Heart left ventricle (tissue), 16 donors: ENCODE measurements at regions of chr12 and their contacts with region 1.

Region 1: DNA sequence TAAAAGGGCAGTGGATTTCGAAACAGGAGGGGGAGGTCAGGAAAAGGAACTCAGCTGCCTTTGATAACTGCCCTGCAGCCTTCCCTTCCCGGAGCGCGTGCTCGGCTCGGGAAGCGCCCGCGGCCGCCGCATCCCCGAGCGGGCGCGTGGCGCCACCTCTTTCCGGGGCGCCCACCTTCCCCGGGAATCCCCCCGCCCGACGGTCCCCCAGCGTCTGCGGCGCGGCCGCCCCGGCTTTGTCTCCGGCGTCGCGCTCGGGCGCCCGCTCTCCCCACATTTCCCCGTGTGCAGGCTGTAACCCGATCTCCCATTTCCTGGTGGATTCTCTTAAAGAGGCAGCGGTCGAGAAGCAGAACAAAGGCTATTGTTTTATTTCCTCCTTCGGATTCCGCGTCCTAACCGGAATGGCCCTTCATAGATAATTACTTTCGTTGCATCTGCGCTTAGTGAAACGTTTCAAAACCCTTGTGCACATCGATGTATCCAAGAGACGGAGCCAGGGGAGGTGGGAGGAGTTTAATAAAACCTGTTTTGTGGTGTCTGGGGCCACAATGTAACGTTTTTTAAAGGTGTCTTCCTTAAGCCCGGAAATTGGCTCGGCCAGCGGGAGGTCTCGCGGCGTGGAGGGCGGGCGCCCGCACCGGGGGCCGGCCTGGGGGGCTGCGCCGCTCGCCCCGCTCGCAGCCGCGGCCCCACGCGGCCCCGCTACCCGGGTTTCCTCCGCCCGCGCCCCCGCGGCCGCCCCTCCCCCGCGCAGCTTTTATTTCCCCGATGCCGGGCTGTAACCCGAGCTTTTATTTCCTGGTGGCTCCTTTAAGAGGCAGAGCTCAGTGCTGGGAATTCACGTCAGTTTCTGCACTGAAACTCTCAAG is at the start of gene ETV6:
- DNase-seq: peak; percentile 75 to 83 (median 77)
- ATAC-seq: peak; percentile 46 to 83 (median 67)
- H3K4me3 ChIP-seq: peak within 1 kb of the TSS; percentile 55 to 94 (median 85)
- H3K27ac ChIP-seq: peak within 1 kb of the TSS; percentile 89 to 100 (median 98)
- H3K4me1 ChIP-seq: peaks cover 0 to 35% (median 23%) of the 10 kb centered on the region in 12 donors
- H3K27me3 ChIP-seq: no peaks in the 10 kb centered on the region
- CTCF ChIP-seq: peak in 2 of 12 donors; percentile 7 to 15
- POLR2A ChIP-seq: peak in 1 of 2 donors; percentile 45
- total RNA-seq, gene ETV6: 7.1 to 37.3 (median 14.4) TPM

Region 2: DNA sequence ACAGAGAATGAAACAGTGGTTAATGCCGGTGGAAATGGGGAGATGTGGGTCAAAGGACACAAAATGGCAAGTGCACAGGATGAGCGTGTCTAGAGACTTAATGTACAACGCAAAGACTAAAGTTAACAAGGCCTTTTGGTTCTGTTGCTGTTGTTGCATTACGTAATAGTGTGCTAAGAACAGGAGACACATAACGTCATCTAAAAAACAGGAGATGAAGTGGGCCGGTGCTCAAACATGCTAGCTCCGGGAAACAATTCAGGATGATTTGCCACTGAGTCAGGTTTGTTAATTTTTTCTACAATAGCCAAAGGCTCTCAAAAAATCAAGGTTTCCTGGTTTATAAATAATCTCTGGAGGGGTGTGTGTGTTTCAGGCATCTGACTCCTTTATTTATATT is 55.9 kb after region 1 on chr12:
- intact Hi-C with region 1: loop called in 1 of 10 experiments (anchors 5 kb)
- DNase-seq: no peak
- ATAC-seq: peak in 3 of 4 donors; percentile 28 to 58 (median 55)
- H3K4me3 ChIP-seq: no peak overlapping the region
- H3K27ac ChIP-seq: peak overlapping the region in 8 of 12 donors; percentile 6 to 79 (median 48)
- H3K4me1 ChIP-seq: peaks cover 0 to 84% (median 45%) of the 10 kb centered on the region in 12 donors
- H3K27me3 ChIP-seq: no peaks in the 10 kb centered on the region
- CTCF ChIP-seq: no peak
- POLR2A ChIP-seq: no peak

Region 3: GRCh38 chr12:11758510-11759493 is 109.7 kb after region 1 on chr12:
- intact Hi-C with region 1: loop called in 6 of 10 experiments (anchors 2 to 10 kb)
- DNase-seq: peak in 4 of 5 donors; percentile 52 to 68 (median 60)
- ATAC-seq: peak; percentile 65 to 83 (median 81)
- H3K4me3 ChIP-seq: peak overlapping the region in 2 of 12 donors; percentile 1 to 7
- H3K27ac ChIP-seq: peak overlapping the region; percentile 37 to 93 (median 86)
- H3K4me1 ChIP-seq: peaks cover 5 to 94% (median 74%) of the 10 kb centered on the region in 12 donors
- H3K27me3 ChIP-seq: no peaks in the 10 kb centered on the region
- CTCF ChIP-seq: no peak
- POLR2A ChIP-seq: no peak

Region 4: DNA sequence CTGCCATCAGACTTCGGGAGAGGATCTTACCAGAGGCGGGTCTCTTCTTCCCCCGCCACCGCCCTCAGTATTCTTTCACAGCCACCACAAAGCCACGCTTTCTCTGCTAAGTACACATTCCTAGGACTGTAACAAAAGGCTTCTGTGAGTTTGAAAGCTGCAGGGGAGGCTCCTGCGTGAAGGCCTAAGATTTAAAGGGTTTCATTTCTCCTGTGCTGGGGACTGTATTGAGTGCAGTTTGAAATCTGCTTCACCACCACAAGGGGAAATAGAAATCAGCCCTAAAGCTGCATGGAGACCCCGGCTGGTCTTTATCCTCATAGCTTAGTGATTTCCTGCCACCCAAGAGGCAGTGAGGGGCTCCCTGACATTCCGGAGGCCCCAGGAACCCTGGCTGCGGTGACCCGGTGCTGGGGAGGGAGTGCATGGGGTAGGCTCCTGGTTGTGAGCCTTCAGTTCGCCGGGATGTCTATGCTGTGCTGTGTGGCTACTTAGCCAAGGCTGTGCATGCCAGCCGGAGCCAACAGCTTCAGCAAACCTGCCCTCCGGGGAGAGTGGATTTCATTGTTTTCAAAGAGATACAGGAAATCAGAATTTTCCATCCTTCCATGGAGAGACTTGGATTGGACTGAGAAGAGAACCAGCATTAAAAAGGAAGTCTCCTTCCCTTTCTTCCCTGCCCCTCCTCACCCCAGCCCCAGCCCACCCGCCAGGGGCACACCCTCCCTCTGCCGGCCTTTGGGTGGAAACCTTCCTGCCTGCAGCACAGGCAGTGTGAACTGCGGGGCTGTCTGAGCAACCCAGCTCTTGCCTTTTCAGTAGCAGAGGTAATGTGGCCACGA is 163.7 kb after region 1 on chr12:
- intact Hi-C with region 1: loop called in 2 of 10 experiments (anchors 2 to 10 kb)
- DNase-seq: peak; percentile 47 to 80 (median 57)
- ATAC-seq: peak; percentile 62 to 82 (median 78)
- H3K4me3 ChIP-seq: peak overlapping the region in 10 of 12 donors; percentile 12 to 47 (median 31)
- H3K27ac ChIP-seq: peak overlapping the region; percentile 66 to 89 (median 76)
- H3K4me1 ChIP-seq: peaks cover 4 to 74% (median 51%) of the 10 kb centered on the region in 12 donors
- H3K27me3 ChIP-seq: no peaks in the 10 kb centered on the region
- CTCF ChIP-seq: peak in 7 of 12 donors; percentile 4 to 36 (median 14)
- POLR2A ChIP-seq: no peak

Region 5: GRCh38 chr12:11877869-11878780 is 229.1 kb after region 1 on chr12:
- intact Hi-C with region 1: loop called in 3 of 10 experiments (anchors 5 to 10 kb)
- DNase-seq: peak in 4 of 5 donors; percentile 45 to 58 (median 50)
- ATAC-seq: peak; percentile 38 to 84 (median 82)
- H3K4me3 ChIP-seq: no peak overlapping the region
- H3K27ac ChIP-seq: peak overlapping the region in 6 of 12 donors; percentile 4 to 59 (median 33)
- H3K4me1 ChIP-seq: peaks cover 8 to 81% (median 41%) of the 10 kb centered on the region in 12 donors
- H3K27me3 ChIP-seq: no peaks in the 10 kb centered on the region
- CTCF ChIP-seq: no peak
- POLR2A ChIP-seq: no peak

Region 6: GRCh38 chr12:11891754-11892386 is 242.8 kb after region 1 on chr12:
- intact Hi-C with region 1: loop called in 7 of 10 experiments (anchors 2 to 10 kb)
- DNase-seq: peak; percentile 34 to 72 (median 60)
- ATAC-seq: peak; percentile 66 to 89 (median 83)
- H3K4me3 ChIP-seq: no peak overlapping the region
- H3K27ac ChIP-seq: peak overlapping the region in 6 of 12 donors; percentile 2 to 57 (median 40)
- H3K4me1 ChIP-seq: peaks cover 0 to 23% (median 10%) of the 10 kb centered on the region in 12 donors
- H3K27me3 ChIP-seq: no peaks in the 10 kb centered on the region
- CTCF ChIP-seq: peak in 11 of 12 donors; percentile 13 to 54 (median 35)
- POLR2A ChIP-seq: no peak

Region 7: GRCh38 chr12:12032851-12033588 is 384.0 kb after region 1 on chr12:
- intact Hi-C with region 1: loop called in 1 of 10 experiments (anchors 2 kb)
- DNase-seq: peak in 4 of 5 donors; percentile 71 to 82 (median 77)
- ATAC-seq: peak; percentile 83 to 92 (median 88)
- H3K4me3 ChIP-seq: peak overlapping the region in 11 of 12 donors; percentile 1 to 59 (median 50)
- H3K27ac ChIP-seq: peak overlapping the region in 11 of 12 donors; percentile 24 to 88 (median 63)
- H3K4me1 ChIP-seq: peaks cover 0 to 15% (median 5%) of the 10 kb centered on the region in 12 donors
- H3K27me3 ChIP-seq: no peaks in the 10 kb centered on the region
- CTCF ChIP-seq: peak; percentile 66 to 93 (median 86)
- POLR2A ChIP-seq: no peak